ACHN (cell line): ENCODE measurements at regions of chr15 and their contacts with region 1.

Region 1: GRCh38 chr15:82985688-82986441 is at the start of gene RAMAC:
- DNase-seq: peak; percentile 96

Region 2: GRCh38 chr15:82849556-82850512 is 136.0 kb before region 1 on chr15:
- in situ Hi-C with region 1: loop called (anchors 10 kb)
- DNase-seq: peak; percentile 82